Ascending aorta (tissue), 2 donors: ENCODE measurements at regions of chr6 and their contacts with region 1.

Region 1: GRCh38 chr6:79536954-79537747 is at the start of gene LCA5:
- DNase-seq: peak; percentile 82 to 96
- H3K4me3 ChIP-seq: peak within 1 kb of the TSS; percentile 78 to 88
- H3K27ac ChIP-seq: peak within 1 kb of the TSS; percentile 89 to 93
- H3K4me1 ChIP-seq: no peaks in the 10 kb centered on the region
- H3K27me3 ChIP-seq: no peaks in the 10 kb centered on the region
- CTCF ChIP-seq: no peak
- total RNA-seq, gene LCA5: 7.2 TPM

Region 2: DNA sequence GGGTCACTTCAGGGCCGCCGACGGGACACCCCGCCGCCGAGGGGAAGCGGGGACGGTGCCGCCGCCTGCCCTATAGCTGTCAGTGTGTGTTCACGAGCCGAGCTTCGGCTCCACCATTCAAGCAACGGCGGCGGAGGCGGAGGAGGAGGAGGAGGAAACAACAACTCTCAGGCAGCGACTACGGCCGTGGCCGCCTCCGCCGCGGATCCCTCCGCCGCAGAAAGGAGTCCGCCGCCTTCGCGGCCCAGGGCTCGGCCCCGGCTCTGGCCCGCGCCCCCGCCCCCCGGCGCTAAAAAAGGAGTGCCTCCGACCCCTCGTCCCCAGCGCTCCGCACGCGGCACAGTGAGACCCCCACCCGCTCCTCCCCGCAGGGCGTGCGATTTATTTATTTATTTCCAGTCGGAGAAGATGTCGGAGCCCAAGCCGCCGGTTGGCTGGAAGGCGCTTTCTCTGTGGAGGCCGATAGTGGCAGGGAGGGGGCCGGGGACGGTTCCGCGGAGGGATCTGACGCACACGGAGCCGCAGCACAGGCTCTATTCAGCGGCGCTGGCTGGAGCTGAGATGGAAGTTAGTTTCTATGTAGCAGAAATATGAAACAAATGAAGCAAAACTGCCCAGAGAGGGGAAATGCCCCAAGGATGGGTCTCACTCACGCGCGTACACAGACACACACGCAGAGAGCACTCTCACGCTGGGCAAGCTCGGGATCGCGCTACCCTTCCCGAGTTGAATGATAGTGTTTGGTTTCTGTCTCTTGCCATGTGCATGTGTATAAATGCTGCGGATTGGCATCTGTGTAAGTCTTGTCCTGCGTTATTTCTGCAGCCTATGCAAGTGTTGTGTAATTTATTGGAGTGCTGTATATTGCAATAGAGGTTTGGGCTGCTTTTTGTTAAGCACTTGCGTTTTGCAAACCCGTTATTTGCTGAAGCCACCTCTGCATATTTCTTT is 458.8 kb before region 1 on chr6 and contains the start of gene PHIP:
- intact Hi-C with region 1: loop called (anchors 2 kb)
- DNase-seq: peak; percentile 73 to 96
- H3K4me3 ChIP-seq: peak within 1 kb of the TSS; percentile 88 to 100
- H3K27ac ChIP-seq: peak within 1 kb of the TSS; percentile 97 to 100
- H3K4me1 ChIP-seq: peaks cover 0 to 17% of the 10 kb centered on the region in 2 donors
- H3K27me3 ChIP-seq: no peaks in the 10 kb centered on the region
- CTCF ChIP-seq: no peak
- total RNA-seq, gene PHIP: 14.9 TPM

Region 3: DNA sequence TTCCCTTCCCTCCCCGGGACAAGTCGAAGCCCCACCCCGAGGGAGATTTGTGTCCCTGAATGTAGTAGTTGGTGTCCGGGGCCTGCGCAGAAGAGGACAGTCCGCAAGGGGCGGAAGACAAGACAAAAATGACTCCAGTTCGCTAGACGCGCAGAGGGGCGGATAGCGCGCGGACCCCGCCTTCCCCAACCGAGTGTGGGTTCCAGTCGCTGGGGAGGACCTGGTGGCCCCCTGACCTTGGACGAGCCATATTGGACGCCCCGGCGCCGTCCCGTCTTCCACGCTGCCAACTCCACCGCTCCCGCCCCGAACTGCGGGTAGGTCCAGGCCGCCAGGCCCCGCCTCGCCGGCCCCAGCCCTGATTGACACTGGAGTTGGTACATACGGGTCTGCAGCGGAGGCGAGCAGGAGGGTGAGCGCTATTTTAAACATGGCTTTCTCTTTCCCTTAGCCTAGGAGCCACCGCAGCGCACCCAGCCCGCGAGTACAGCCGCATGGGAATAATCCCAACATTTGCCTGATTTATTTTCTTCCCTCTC is 303.5 kb before region 1 on chr6:
- intact Hi-C with region 1: loop called (anchors 5 kb)
- DNase-seq: peak; percentile 57 to 94
- H3K4me3 ChIP-seq: peak overlapping the region; percentile 81 to 85
- H3K27ac ChIP-seq: peak overlapping the region; percentile 76 to 88
- H3K4me1 ChIP-seq: peaks cover 0 to 5% of the 10 kb centered on the region in 2 donors
- H3K27me3 ChIP-seq: no peaks in the 10 kb centered on the region
- CTCF ChIP-seq: peak; percentile 15 to 34 (median 19)

Region 4: DNA sequence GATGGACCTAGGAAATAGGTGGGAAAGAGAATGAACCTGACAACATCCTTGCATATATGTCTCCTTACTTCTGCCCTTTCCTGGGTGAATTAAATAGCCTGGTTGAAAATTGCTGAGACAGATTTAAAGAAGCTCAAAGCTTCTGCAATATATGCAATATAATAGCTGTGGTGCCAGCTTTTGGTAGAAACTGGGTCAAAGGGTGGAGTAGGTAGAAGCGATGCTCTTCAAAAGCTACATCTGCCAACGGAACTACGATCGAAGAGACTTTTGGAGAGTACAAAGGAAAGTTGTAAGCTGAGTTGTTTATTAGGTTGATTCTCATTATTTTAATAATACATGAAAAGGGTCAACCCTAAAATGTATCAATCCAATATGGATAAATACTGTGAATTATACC is 444.5 kb after region 1 on chr6:
- intact Hi-C with region 1: no loop called
- DNase-seq: no peak
- H3K4me3 ChIP-seq: no peak overlapping the region
- H3K27ac ChIP-seq: no peak overlapping the region
- H3K4me1 ChIP-seq: no peaks in the 10 kb centered on the region
- H3K27me3 ChIP-seq: no peaks in the 10 kb centered on the region
- CTCF ChIP-seq: no peak

Region 5: GRCh38 chr6:80004173-80005072 is 467.3 kb after region 1 on chr6 and contains the start of gene TTK:
- intact Hi-C with region 1: loop called (anchors 10 kb)
- DNase-seq: peak; percentile 74 to 95
- H3K4me3 ChIP-seq: peak within 1 kb of the TSS; percentile 73 to 81
- H3K27ac ChIP-seq: peak within 1 kb of the TSS; percentile 75 to 91
- H3K4me1 ChIP-seq: peaks cover 0 to 9% of the 10 kb centered on the region in 2 donors
- H3K27me3 ChIP-seq: no peaks in the 10 kb centered on the region
- CTCF ChIP-seq: no peak
- total RNA-seq, gene TTK: not detected